Ascending aorta (tissue), 2 donors: ENCODE measurements at regions of chr20 and their contacts with region 1.

Region 1: GRCh38 chr20:38962044-38962927 is at the start of gene DHX35:
- DNase-seq: peak; percentile 87 to 98
- H3K4me3 ChIP-seq: peak within 1 kb of the TSS; percentile 75 to 95
- H3K27ac ChIP-seq: peak within 1 kb of the TSS; percentile 83 to 93
- H3K4me1 ChIP-seq: peaks cover 7 to 12% of the 10 kb centered on the region in 2 donors
- H3K27me3 ChIP-seq: no peaks in the 10 kb centered on the region
- CTCF ChIP-seq: peak in 1 of 3 experiments; percentile 45
- total RNA-seq, gene DHX35: 35.3 TPM

Region 2: GRCh38 chr20:38748097-38748860 is 214.0 kb before region 1 on chr20 and contains the start of gene ACTR5:
- intact Hi-C with region 1: loop called (anchors 2 kb)
- DNase-seq: peak; percentile 50 to 94
- H3K4me3 ChIP-seq: peak within 1 kb of the TSS; percentile 79 to 82
- H3K27ac ChIP-seq: peak within 1 kb of the TSS; percentile 87 to 91
- H3K4me1 ChIP-seq: peaks cover 0 to 4% of the 10 kb centered on the region in 2 donors
- H3K27me3 ChIP-seq: no peaks in the 10 kb centered on the region
- CTCF ChIP-seq: no peak
- total RNA-seq, gene ACTR5: 5.9 TPM

Region 3: DNA sequence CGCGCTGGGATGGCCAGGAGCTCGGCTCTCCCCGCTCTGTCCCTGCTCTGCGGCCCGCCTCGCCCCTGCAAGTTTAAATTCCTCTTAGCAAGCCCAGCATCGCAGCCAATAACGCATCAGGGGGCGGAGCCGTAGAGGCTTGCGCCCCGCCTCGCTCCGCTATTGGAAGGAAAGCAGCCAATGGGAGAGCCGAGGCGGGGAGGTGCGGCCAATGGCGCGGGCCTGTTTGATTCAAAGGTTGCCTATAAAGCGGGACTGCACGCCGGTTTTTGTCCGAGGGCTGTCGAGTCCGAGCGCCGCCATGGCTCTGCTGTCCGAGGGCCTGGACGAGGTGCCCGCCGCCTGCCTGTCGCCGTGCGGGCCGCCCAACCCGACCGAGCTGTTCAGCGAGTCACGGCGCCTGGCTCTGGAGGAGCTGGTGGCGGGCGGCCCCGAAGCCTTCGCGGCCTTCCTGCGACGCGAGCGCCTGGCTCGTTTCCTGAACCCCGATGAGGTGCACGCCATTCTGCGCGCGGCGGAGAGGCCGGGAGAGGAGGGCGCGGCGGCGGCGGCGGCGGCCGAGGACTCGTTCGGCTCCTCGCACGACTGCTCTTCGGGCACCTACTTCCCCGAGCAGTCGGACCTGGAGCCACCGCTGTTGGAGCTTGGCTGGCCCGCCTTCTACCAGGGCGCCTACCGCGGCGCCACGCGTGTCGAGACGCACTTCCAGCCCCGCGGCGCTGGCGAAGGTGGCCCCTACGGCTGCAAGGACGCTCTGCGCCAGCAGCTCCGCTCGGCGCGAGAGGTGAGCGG is 35.9 kb before region 1 on chr20 and contains the start of gene FAM83D:
- intact Hi-C with region 1: loop called (anchors 1 kb)
- DNase-seq: peak; percentile 88 to 97
- H3K4me3 ChIP-seq: peak within 1 kb of the TSS; percentile 56 to 79
- H3K27ac ChIP-seq: no peak within 1 kb of the TSS
- H3K4me1 ChIP-seq: peaks cover 0 to 6% of the 10 kb centered on the region in 2 donors
- H3K27me3 ChIP-seq: no peaks in the 10 kb centered on the region
- CTCF ChIP-seq: no peak
- total RNA-seq, gene FAM83D: 0.53 TPM

Region 4: DNA sequence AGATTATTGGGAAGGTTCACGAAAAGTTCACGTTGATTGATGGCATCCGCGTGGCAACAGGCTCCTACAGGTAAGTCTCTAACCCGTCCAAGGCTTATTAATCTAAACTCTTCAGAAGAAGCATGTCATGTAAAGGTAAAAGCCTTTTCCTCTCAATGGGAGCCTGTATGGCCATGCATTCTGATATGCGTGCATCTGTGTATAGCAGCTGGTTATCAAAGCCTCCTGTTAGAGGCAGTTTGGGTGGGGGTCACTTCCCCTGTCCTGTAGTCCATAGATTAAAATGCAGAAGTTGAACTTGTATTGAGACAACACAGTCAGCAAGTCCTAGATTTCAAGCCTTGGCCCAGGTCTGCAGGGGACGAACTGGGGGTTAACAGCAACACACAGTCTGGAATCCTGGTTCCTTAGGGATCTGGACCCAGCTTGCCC is 14.3 kb before region 1 on chr20:
- intact Hi-C with region 1: no loop called
- DNase-seq: no peak
- H3K4me3 ChIP-seq: no peak overlapping the region
- H3K27ac ChIP-seq: no peak overlapping the region
- H3K4me1 ChIP-seq: no peaks in the 10 kb centered on the region
- H3K27me3 ChIP-seq: no peaks in the 10 kb centered on the region
- CTCF ChIP-seq: no peak

Region 5: DNA sequence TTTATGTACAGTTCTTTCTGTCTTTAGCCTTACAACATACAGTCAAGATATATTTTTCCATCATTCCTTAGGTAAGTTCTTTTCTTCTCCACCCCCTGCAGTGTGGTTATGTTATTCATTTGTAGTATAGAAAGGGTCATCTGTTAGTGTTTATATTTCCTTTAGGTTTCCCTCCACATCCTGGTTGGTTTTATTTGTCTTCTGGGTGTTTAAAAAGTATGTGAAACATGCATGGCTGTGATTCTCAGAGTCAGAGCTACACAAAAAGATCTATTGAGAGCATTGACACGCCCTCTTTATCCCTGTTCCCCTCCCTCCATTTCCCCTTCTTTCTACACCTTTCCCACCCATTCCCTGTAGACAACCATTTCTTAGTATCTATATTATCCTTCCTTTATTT is 20.0 kb after region 1 on chr20:
- intact Hi-C with region 1: loop called (anchors 2 kb)
- DNase-seq: no peak
- H3K4me3 ChIP-seq: no peak overlapping the region
- H3K27ac ChIP-seq: no peak overlapping the region
- H3K4me1 ChIP-seq: peaks cover 6 to 23% of the 10 kb centered on the region in 2 donors
- H3K27me3 ChIP-seq: no peaks in the 10 kb centered on the region
- CTCF ChIP-seq: no peak

Region 6: DNA sequence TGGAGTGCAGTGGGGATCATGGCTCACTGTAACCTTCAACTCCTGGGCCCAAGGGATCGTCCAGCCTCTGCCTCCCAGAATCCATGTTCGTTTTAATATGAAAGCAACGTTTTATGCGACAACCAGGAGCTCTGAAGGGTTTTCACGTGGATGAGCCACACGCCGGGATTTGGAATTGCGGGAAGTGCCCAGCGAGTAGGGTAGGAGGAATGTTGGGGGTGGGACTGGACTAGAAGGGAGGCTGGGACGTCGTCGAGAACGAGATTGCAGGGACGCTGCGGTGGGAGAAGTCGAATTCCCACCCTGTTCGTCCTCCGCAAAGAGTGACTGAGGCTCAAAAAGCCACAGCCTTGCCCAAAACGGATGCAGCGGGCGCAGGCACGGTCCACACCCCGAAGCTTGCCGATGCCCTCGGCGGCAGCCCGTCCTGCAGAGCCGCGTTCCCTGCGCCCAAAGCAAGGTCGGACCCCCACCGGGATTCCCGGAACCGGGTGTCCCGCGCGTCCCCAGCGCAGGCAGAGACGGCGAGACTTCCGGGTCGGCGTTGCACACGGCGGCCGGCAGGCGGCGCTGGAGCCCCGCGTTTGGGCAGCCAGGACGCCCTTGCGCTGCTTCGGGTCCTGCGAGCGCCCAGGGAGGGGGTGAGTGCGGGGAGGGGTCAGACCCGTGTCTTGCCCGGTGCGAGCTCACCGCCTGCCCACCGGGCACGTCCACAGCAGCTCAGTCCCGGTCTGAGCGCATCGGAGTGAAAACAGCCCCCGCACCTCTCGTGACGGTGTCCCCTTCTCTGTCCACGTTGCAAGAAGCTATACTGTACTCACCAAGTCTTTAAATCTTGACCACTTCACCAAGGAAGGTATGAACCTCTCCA is 87.6 kb after region 1 on chr20:
- intact Hi-C with region 1: loop called (anchors 1 kb)
- DNase-seq: peak in 1 of 2 donors; percentile 83
- H3K4me3 ChIP-seq: peak overlapping the region; percentile 70 to 81
- H3K27ac ChIP-seq: peak overlapping the region; percentile 60 to 62
- H3K4me1 ChIP-seq: no peaks in the 10 kb centered on the region
- H3K27me3 ChIP-seq: no peaks in the 10 kb centered on the region
- CTCF ChIP-seq: peak; percentile 95 to 99 (median 99)